ENCODE measurements at regions of chr11 and their contacts with region 1.

Region 1: GRCh38 chr11:65506770-65507505 is 8.1 kb downstream of the MALAT1 start:
- DNase-seq: no peak
- H3K4me3 ChIP-seq: peak overlapping the region; percentile 72 to 82 (median 76)
- H3K27ac ChIP-seq: peak overlapping the region; percentile 95 to 99 (median 98)
- H3K4me1 ChIP-seq: peaks cover 36 to 58% (median 53%) of the 10 kb centered on the region in 4 donors
- H3K27me3 ChIP-seq: no peaks in the 10 kb centered on the region
- CTCF ChIP-seq: no peak
- EP300 ChIP-seq: no peak
- POLR2A ChIP-seq: no peak

Region 2: DNA sequence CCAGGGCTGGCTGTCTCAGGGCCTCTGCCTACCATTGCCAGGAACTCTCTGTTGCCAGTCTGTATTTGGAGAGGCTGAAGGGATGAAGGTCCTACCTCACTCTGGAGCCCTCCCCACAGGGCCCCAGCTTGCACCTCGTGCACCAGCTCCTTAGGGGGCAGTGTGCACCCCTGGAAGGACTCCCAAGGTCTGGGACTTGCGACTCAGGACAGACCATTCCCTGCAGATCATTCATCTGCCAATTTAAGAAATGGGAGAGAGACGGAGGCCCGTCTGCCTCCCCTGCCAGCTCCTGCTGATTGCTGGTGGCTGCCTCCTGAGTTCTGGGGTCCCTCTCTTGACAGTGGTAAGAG is 35.6 kb before region 1 on chr11:
- intact Hi-C with region 1: loop called (anchors 5 kb)
- DNase-seq: no peak
- H3K4me3 ChIP-seq: peak overlapping the region; percentile 32 to 42 (median 38)
- H3K27ac ChIP-seq: peak overlapping the region; percentile 93 to 99 (median 96)
- H3K4me1 ChIP-seq: peaks cover 42 to 55% (median 52%) of the 10 kb centered on the region in 4 donors
- H3K27me3 ChIP-seq: no peaks in the 10 kb centered on the region
- CTCF ChIP-seq: peak; percentile 59 to 78 (median 73)
- EP300 ChIP-seq: peak; percentile 12
- POLR2A ChIP-seq: no peak

Region 3: DNA sequence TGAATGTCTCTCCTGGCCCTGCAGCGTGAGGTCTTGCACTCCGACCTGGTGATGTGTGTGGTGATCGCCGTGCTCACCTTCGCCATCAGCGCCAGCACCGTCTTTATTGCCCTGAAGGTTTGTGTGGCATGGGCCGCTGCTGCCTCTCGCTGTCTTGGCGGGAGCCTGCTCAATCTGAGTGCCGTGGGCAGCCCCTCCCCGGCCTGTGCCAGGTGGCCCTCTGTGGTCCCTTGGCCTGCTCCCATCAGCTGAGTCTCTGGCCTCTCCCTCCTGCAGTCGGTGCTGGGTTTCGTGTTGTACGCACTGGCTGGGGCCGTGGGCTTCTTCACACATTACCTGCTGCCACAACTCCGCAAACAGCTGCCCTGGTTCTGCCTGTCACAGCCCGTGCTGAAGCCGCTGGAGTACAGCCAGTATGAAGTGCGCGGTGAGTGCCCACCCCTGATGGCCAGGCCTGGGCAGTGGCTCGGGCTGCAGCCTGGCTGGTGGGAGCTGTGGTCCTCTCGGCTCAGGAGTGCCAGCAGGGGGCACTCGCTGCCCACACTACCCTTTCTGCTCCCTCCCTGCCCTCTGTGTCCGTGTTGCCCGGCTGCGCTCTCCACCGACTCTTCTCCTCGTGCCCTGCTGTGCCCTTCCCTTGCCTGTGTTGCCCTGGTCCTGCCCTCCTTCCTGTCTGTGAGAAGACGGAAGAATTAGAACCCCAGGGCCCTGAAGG is 118.8 kb after region 1 on chr11:
- intact Hi-C with region 1: no loop called
- DNase-seq: no peak
- H3K4me3 ChIP-seq: no peak overlapping the region
- H3K27ac ChIP-seq: no peak overlapping the region
- H3K4me1 ChIP-seq: peaks cover 0 to 8% (median 4%) of the 10 kb centered on the region in 4 donors
- H3K27me3 ChIP-seq: no peaks in the 10 kb centered on the region
- CTCF ChIP-seq: peak; percentile 51 to 70 (median 62)
- EP300 ChIP-seq: no peak
- POLR2A ChIP-seq: no peak